ENCODE measurements at regions of chr3 and their contacts with region 1.

Region 1: GRCh38 chr3:45656575-45657363 is 32.4 kb upstream of the SACM1L start:
- DNase-seq: peak; percentile 94
- ATAC-seq: peak; percentile 97
- H3K4me3 Mint-ChIP-seq: no peak overlapping the region
- H3K27ac Mint-ChIP-seq: no peak overlapping the region
- H3K4me1 Mint-ChIP-seq: peaks cover 14% of the 10 kb centered on the region
- H3K27me3 Mint-ChIP-seq: no peaks in the 10 kb centered on the region
- CTCF ChIP-seq: peak; percentile 91

Region 2: GRCh38 chr3:45507820-45508317 is 148.9 kb before region 1 on chr3:
- CTCF ChIA-PET with region 1: interaction called, 57 read pairs
- POLR2A ChIA-PET with region 1: no interaction called
- intact Hi-C with region 1: loop called (anchors 2 kb)
- DNase-seq: peak; percentile 9
- ATAC-seq: no peak
- H3K4me3 Mint-ChIP-seq: no peak overlapping the region
- H3K27ac Mint-ChIP-seq: no peak overlapping the region
- H3K4me1 Mint-ChIP-seq: peaks cover 12% of the 10 kb centered on the region
- H3K27me3 Mint-ChIP-seq: no peaks in the 10 kb centered on the region
- CTCF ChIP-seq: no peak

Region 3: GRCh38 chr3:45546716-45547701 is 109.8 kb before region 1 on chr3:
- CTCF ChIA-PET with region 1: interaction called, 10 read pairs
- POLR2A ChIA-PET with region 1: no interaction called
- intact Hi-C with region 1: no loop called
- DNase-seq: peak; percentile 71
- ATAC-seq: peak; percentile 39
- H3K4me3 Mint-ChIP-seq: no peak overlapping the region
- H3K27ac Mint-ChIP-seq: no peak overlapping the region
- H3K4me1 Mint-ChIP-seq: peaks cover 9% of the 10 kb centered on the region
- H3K27me3 Mint-ChIP-seq: no peaks in the 10 kb centered on the region
- CTCF ChIP-seq: peak; percentile 63

Region 4: GRCh38 chr3:45599424-45599886 is 57.3 kb before region 1 on chr3:
- CTCF ChIA-PET with region 1: interaction called, 21 read pairs
- POLR2A ChIA-PET with region 1: no interaction called
- intact Hi-C with region 1: loop called (anchors 5 kb)
- DNase-seq: no peak
- ATAC-seq: no peak
- H3K4me3 Mint-ChIP-seq: no peak overlapping the region
- H3K27ac Mint-ChIP-seq: no peak overlapping the region
- H3K4me1 Mint-ChIP-seq: peaks cover 52% of the 10 kb centered on the region
- H3K27me3 Mint-ChIP-seq: no peaks in the 10 kb centered on the region
- CTCF ChIP-seq: no peak

Region 5: DNA sequence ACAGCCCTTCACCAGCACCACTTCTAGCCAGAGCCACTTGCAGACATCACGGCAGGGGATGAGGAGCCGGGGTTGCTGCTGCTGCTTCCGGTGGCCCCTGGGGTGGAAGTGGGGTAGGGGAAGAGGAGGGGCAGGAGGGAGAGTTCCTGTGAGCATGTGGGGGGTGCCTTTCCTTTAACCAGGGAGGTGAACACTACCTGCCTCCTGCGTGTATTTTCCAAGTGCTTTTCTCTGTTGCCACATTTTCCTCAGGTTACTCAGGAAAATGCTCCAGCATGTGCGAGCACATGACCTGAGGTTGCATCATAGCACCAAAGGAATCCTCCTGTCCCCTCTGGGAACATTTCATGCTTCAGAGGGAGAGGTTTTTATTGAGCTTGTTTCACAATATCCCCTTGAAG is 20.3 kb after region 1 on chr3:
- CTCF ChIA-PET with region 1: interaction called, 30 read pairs
- POLR2A ChIA-PET with region 1: no interaction called
- intact Hi-C with region 1: no loop called
- DNase-seq: peak; percentile 72
- ATAC-seq: peak; percentile 96
- H3K4me3 Mint-ChIP-seq: peak overlapping the region; percentile 51
- H3K27ac Mint-ChIP-seq: peak overlapping the region; percentile 89
- H3K4me1 Mint-ChIP-seq: peaks cover 21% of the 10 kb centered on the region
- H3K27me3 Mint-ChIP-seq: no peaks in the 10 kb centered on the region
- CTCF ChIP-seq: no peak

Region 6: GRCh38 chr3:45704301-45704943 is 47.7 kb after region 1 on chr3:
- CTCF ChIA-PET with region 1: interaction called, 11 read pairs
- POLR2A ChIA-PET with region 1: no interaction called
- intact Hi-C with region 1: no loop called
- DNase-seq: no peak
- ATAC-seq: peak; percentile 30
- H3K4me3 Mint-ChIP-seq: no peak overlapping the region
- H3K27ac Mint-ChIP-seq: peak overlapping the region; percentile 59
- H3K4me1 Mint-ChIP-seq: peaks cover 48% of the 10 kb centered on the region
- H3K27me3 Mint-ChIP-seq: no peaks in the 10 kb centered on the region
- CTCF ChIP-seq: no peak